Heart left ventricle (tissue), 16 donors: ENCODE measurements at regions of chr16 and their contacts with region 1.

Region 1: DNA sequence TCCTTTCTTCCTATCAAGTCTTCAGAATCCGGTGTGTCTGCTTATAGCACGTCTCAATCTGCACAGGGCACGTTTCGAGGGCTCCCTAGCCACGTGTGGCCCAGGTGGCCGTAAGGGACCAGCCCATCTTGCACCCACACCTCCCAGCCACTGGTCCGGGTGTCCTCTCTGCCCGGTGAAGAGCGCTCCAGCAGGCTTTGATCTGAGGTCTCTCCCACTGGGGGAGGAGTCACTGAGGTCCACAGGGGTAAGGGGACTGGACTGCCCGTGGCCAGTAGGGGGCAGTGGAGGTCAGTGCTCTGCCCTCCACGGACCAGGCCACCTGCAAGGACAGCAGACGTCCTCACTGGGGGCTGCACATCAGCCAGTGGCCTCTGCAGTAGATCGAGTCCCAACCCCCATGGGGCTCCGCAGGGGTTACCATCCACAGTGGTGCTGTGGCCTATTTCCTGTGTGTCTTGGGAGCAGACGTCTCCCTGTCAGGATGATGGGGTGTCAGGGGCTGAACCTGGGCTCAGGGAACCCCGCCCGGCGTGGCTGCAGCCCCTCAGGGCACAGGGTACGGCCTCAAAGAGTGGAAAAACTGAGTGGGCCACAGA is 204.1 kb upstream of the CIBAR2 start:
- DNase-seq: peak in 4 of 5 donors; percentile 51 to 67 (median 59)
- ATAC-seq: peak; percentile 73 to 80 (median 75)
- H3K4me3 ChIP-seq: no peak overlapping the region
- H3K27ac ChIP-seq: no peak overlapping the region
- H3K4me1 ChIP-seq: peaks cover 0 to 32% (median 18%) of the 10 kb centered on the region in 12 donors
- H3K27me3 ChIP-seq: no peaks in the 10 kb centered on the region
- CTCF ChIP-seq: peak; percentile 71 to 89 (median 79)
- POLR2A ChIP-seq: no peak

Region 2: DNA sequence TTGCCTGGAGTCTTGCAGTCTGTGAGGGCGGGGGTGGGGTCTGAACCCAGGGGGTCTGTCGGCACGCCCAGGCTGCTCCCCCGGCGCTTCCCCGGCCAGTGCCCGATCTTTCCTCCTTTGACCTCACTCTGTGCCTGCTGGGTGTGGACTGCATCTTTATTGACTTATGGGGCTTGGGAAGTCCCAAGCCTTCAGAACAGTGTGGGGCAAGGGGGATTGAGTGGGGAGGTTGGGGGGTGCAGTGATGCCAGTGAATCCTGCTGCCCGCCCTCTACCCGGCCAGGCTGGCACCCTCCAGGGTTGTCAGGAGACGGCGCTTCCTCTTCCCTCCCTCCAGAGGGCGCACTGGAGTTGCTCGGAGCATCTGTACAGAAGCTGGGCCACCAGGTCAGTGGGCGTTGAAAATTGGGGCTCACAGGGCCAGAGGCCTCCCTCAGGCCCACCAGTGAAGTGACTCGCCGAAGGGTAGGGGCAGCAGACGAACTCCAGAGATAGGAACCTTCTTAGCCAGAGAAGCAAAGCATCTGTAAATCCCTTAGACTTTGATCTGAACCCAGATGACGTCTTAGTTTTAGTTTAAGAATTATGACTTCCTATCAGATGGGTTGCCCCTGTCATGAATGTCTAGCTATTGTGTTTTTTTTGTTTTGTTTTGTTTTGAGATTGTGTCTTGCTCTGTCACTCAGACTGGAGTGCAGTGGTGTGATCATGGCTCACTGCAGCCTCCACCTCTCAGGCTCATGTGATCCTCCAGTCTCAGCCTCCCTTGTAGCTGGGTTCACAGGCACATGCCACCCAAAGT is 19.4 kb before region 1 on chr16:
- intact Hi-C with region 1: loop called in 1 of 10 experiments (anchors 1 kb)
- DNase-seq: peak in 1 of 5 donors; percentile 47
- ATAC-seq: peak in 3 of 4 donors; percentile 55 to 68 (median 68)
- H3K4me3 ChIP-seq: no peak overlapping the region
- H3K27ac ChIP-seq: no peak overlapping the region
- H3K4me1 ChIP-seq: peaks cover 0 to 8% (median 0%) of the 10 kb centered on the region in 12 donors
- H3K27me3 ChIP-seq: no peaks in the 10 kb centered on the region
- CTCF ChIP-seq: peak; percentile 44 to 70 (median 62)
- POLR2A ChIP-seq: no peak

Region 3: DNA sequence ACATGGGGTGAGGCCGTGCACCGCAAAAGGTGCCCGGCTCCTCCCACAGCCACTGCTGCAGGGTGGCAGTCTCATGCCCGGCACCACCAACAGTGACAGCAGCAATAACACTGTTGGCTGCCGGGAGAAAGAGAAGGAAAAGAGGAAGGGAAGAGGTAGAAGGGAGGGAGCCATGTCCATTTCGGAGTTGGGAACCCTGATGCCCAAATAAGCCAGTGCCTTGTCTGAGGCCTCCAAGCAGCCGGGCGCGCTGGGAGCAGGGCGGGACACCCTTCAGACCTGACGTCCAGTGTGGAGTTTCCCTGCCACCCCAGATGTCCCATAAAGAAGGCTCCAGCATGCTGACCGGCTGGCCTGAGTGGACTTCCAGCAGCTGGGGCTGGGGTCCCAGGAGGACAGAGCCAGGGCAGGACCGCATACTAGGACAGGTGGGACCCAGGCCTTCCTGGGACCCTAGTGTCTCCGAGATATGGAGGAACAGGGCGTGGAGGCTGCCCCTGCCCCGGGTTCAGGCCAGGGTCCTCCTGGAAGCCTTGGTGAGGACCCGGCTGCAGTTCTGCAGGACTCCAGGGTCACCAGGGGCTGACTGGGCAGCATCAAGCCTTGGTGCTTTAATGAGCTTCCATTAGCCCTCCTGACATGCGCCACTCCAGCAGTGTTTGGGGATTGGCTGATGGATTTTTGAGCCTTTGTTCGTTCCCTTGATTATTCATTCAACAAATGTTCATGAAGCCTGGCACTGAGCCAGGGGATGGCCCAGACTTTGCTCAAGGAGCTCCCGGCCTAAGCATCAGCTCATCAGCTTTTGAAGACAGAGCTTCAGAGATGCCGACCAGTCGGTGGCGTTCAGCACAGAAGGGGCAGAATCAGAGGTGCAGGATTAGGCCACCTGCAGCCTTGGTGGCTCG is 19.4 kb after region 1 on chr16:
- intact Hi-C with region 1: no loop called
- DNase-seq: peak in 1 of 5 donors; percentile 42
- ATAC-seq: no peak
- H3K4me3 ChIP-seq: no peak overlapping the region
- H3K27ac ChIP-seq: no peak overlapping the region
- H3K4me1 ChIP-seq: peaks cover 0 to 10% (median 2%) of the 10 kb centered on the region in 12 donors
- H3K27me3 ChIP-seq: peaks cover 0 to under 1% (median 0%) of the 10 kb centered on the region in 9 donors
- CTCF ChIP-seq: no peak
- POLR2A ChIP-seq: no peak